ENCODE measurements at regions of chr12 and their contacts with region 1.

Region 1: DNA sequence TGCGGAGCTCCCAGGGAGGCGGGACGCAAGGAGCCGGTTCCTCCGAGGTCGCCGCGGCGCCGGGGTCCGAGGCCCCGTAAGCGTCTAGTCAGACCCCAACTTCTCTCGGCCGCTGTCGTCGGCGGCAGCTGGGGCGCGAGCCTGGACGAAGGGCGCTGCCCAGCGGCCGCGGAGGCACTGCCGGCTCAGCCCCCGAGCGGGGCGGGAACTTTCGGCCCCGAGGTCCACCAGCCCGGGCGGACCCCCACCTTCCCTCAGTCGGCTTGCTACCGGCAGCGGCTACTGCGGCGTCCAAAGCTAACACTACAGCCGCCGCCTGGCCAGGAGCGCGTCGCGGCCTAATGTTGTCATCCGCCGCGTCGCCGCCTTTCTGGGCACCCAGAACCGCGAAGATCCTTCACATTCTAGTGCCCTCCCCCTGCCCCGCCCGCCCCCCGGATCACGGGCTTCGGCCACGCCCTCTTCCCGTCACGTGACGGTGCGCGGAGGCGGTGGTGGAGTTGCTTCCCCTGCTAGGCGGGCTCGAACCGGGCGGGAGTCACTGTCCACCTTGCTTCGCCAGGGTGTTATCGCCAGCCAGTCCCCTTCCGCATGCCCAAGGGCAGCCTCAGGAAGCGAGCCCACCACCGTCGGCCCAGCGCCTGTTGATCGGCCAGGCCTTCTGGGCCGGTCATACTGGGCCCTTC is at the start of gene OSBPL8:
- DNase-seq: peak; percentile 95
- H3K4me3 Mint-ChIP-seq: peak within 1 kb of the TSS; percentile 89
- H3K27ac Mint-ChIP-seq: peak within 1 kb of the TSS; percentile 95
- H3K4me1 Mint-ChIP-seq: peaks cover 24% of the 10 kb centered on the region
- H3K27me3 Mint-ChIP-seq: no peaks in the 10 kb centered on the region
- CTCF ChIP-seq: no peak
- total RNA-seq, gene OSBPL8: 71.1 and 77.2 TPM in 2 replicates

Region 2: GRCh38 chr12:76470028-76470939 is 89.3 kb before region 1 on chr12:
- CTCF ChIA-PET with region 1: interaction called, 3 read pairs
- POLR2A ChIA-PET with region 1: interaction called, 13 read pairs
- intact Hi-C with region 1: no loop called
- DNase-seq: peak; percentile 78
- H3K4me3 Mint-ChIP-seq: no peak overlapping the region
- H3K27ac Mint-ChIP-seq: no peak overlapping the region
- H3K4me1 Mint-ChIP-seq: peaks cover 11% of the 10 kb centered on the region
- H3K27me3 Mint-ChIP-seq: no peaks in the 10 kb centered on the region
- CTCF ChIP-seq: no peak

Region 3: GRCh38 chr12:76548222-76548837 is 11.2 kb before region 1 on chr12:
- CTCF ChIA-PET with region 1: interaction called, 5 read pairs
- POLR2A ChIA-PET with region 1: interaction called, 43 read pairs
- intact Hi-C with region 1: no loop called
- DNase-seq: peak; percentile 27
- H3K4me3 Mint-ChIP-seq: no peak overlapping the region
- H3K27ac Mint-ChIP-seq: peak overlapping the region; percentile 8
- H3K4me1 Mint-ChIP-seq: peaks cover 42% of the 10 kb centered on the region
- H3K27me3 Mint-ChIP-seq: no peaks in the 10 kb centered on the region
- CTCF ChIP-seq: no peak

Region 4: GRCh38 chr12:76611533-76611932 is 52.0 kb after region 1 on chr12:
- CTCF ChIA-PET with region 1: no interaction called
- POLR2A ChIA-PET with region 1: interaction called, 11 read pairs
- intact Hi-C with region 1: no loop called
- DNase-seq: peak; percentile 98
- H3K4me3 Mint-ChIP-seq: peak overlapping the region; percentile 44
- H3K27ac Mint-ChIP-seq: peak overlapping the region; percentile 90
- H3K4me1 Mint-ChIP-seq: peaks cover 26% of the 10 kb centered on the region
- H3K27me3 Mint-ChIP-seq: no peaks in the 10 kb centered on the region
- CTCF ChIP-seq: no peak

Measured in MCF 10A (cell line).